Upper lobe of right lung (tissue), 1 donor: ENCODE measurements at regions of chr4 and their contacts with region 1.

Region 1: GRCh38 chr4:15457406-15458201 is 12.1 kb upstream of the CC2D2A start:
- DNase-seq: no peak
- ATAC-seq: peak; percentile 88
- H3K4me3 ChIP-seq: no peak overlapping the region
- H3K27ac ChIP-seq: peak overlapping the region; percentile 33
- H3K4me1 ChIP-seq: peaks cover 5% of the 10 kb centered on the region
- H3K27me3 ChIP-seq: no peaks in the 10 kb centered on the region
- CTCF ChIP-seq: peak; percentile 75

Region 2: DNA sequence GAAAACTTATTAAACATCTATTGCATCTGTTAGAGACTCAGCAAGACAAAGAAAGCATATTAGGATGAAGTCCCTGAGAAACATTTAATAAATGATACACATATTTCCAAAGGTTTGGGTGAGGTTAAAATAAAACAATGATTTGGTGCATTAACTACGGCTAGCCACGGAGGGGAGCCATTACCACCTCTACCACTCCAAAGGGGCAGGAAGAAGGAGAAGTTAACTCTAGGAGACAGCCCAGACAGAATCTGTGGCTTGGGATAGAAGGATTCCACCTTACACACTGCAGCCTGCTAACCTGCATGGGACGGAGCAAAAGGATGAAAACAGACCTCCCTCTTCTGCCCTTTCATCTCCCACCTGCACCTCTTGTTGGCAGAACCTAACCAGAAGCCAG is 218.9 kb before region 1 on chr4:
- intact Hi-C with region 1: loop called (anchors 5 kb)
- DNase-seq: no peak
- ATAC-seq: peak; percentile 92
- H3K4me3 ChIP-seq: no peak overlapping the region
- H3K27ac ChIP-seq: no peak overlapping the region
- H3K4me1 ChIP-seq: peaks cover 3% of the 10 kb centered on the region
- H3K27me3 ChIP-seq: no peaks in the 10 kb centered on the region
- CTCF ChIP-seq: peak; percentile 62

Region 3: DNA sequence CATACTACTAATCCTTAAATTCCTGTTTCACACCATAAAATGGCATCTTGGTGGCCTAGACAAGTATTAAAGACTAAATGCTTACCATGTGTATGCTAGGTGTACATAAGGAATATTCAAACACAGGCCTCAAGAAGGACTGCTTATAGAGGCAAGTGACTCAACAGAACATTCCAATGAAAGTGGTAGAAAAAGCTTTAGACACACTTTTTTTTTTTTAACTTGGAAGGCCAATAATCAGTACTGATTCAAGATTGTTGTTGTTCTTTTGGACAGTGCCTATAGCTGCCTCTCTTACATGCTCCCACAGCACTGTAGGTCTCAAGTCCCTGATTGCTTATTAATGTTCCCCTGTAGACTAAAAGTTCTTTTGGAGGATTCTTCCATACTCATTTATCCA is 119.9 kb after region 1 on chr4:
- intact Hi-C with region 1: no loop called
- DNase-seq: no peak
- ATAC-seq: no peak
- H3K4me3 ChIP-seq: no peak overlapping the region
- H3K27ac ChIP-seq: no peak overlapping the region
- H3K4me1 ChIP-seq: no peaks in the 10 kb centered on the region
- H3K27me3 ChIP-seq: no peaks in the 10 kb centered on the region
- CTCF ChIP-seq: no peak